ENCODE measurements at regions of chr5 and their contacts with region 1.

Region 1: GRCh38 chr5:78964887-78965286 is 20.2 kb downstream of the ARSB start:
- DNase-seq: peak; percentile 38 to 77
- ATAC-seq: peak; percentile 90 to 92
- H3K4me3 ChIP-seq: no peak overlapping the region
- H3K27ac ChIP-seq: no peak overlapping the region
- H3K4me1 ChIP-seq: no peaks in the 10 kb centered on the region
- CTCF ChIP-seq: peak; percentile 84
- EP300 ChIP-seq: no peak
- POLR2A ChIP-seq: no peak
- RAD21 ChIP-seq: peak; percentile 89 to 93

Region 2: GRCh38 chr5:78467752-78468357 is 497.0 kb before region 1 on chr5:
- CTCF ChIA-PET with region 1: interaction called, 47 read pairs
- POLR2A ChIA-PET with region 1: no interaction called
- DNase-seq: peak; percentile 37 to 54
- ATAC-seq: peak; percentile 58 to 86; a peak in 3 of 6 replicates
- H3K4me3 ChIP-seq: no peak overlapping the region
- H3K27ac ChIP-seq: no peak overlapping the region
- H3K4me1 ChIP-seq: 0 out of 3 replicates have a peak, but pooled peaks cover 4% of the 10 kb centered on the region
- CTCF ChIP-seq: peak; percentile 87
- EP300 ChIP-seq: no peak
- POLR2A ChIP-seq: no peak
- RAD21 ChIP-seq: peak; percentile 79 to 81

Region 3: DNA sequence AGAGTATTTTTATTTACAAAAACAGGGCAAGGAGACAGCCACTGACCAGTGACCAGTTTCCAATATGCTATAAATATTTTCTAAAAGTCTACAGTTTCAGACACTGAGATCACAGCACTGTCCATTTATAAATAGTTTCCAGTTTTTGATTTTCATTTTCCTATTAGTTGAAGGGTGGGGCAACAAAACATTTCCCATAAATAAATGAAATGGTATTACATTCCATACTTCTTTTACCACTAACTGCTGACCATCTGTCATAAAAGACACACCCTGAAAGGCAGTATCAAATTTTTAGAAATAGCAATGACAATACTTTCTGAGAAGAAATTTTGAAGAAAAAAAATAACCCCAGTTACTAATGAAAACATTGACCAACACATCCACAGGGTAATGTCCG is 106.5 kb before region 1 on chr5:
- CTCF ChIA-PET with region 1: no interaction called
- POLR2A ChIA-PET with region 1: no interaction called
- DNase-seq: no peak
- ATAC-seq: no peak
- H3K4me3 ChIP-seq: no peak overlapping the region
- H3K27ac ChIP-seq: no peak overlapping the region
- H3K4me1 ChIP-seq: no peaks in the 10 kb centered on the region
- CTCF ChIP-seq: no peak
- EP300 ChIP-seq: no peak
- POLR2A ChIP-seq: no peak
- RAD21 ChIP-seq: no peak

Region 4: GRCh38 chr5:78899922-78900362 is 64.9 kb before region 1 on chr5:
- CTCF ChIA-PET with region 1: interaction called, 20 read pairs
- POLR2A ChIA-PET with region 1: no interaction called
- DNase-seq: peak; percentile 11 to 50
- ATAC-seq: peak in 1 of 2 experiments; percentile 77; a peak in 3 of 6 replicates
- H3K4me3 ChIP-seq: no peak overlapping the region
- H3K27ac ChIP-seq: no peak overlapping the region
- H3K4me1 ChIP-seq: no peaks in the 10 kb centered on the region
- CTCF ChIP-seq: peak; percentile 55
- EP300 ChIP-seq: no peak
- POLR2A ChIP-seq: no peak
- RAD21 ChIP-seq: peak; percentile 58 to 86

Region 5: DNA sequence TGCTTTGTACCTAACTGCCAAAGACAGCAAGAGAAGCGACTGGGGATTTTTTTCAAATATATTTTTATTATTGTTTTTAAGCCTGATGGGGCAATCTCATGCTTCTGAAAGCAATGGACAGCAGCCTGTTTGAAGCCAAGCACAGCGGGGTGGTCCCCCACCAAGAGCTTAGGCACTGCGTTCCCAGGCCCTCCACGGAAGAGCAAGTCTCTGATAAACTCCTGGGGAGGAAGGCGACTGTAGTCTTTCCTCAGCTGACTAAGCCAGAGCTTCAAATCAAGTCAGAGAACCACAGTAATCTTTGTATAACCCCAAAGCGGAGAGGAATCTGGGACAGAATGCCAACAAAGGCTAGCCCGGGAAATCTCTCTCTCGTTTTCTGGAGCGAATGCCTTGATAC is 34.2 kb before region 1 on chr5:
- CTCF ChIA-PET with region 1: interaction called, 15 read pairs
- POLR2A ChIA-PET with region 1: no interaction called
- DNase-seq: no peak
- ATAC-seq: no peak
- H3K4me3 ChIP-seq: no peak overlapping the region
- H3K27ac ChIP-seq: no peak overlapping the region
- H3K4me1 ChIP-seq: peaks cover 9% of the 10 kb centered on the region
- CTCF ChIP-seq: no peak
- EP300 ChIP-seq: no peak
- POLR2A ChIP-seq: no peak
- RAD21 ChIP-seq: no peak

Region 6: GRCh38 chr5:78953092-78953800 is 11.6 kb before region 1 on chr5:
- CTCF ChIA-PET with region 1: interaction called, 18 read pairs
- POLR2A ChIA-PET with region 1: no interaction called
- DNase-seq: no peak
- ATAC-seq: no peak
- H3K4me3 ChIP-seq: no peak overlapping the region
- H3K27ac ChIP-seq: no peak overlapping the region
- H3K4me1 ChIP-seq: peaks cover 1% of the 10 kb centered on the region; the same call in 2 of the 3 replicates
- CTCF ChIP-seq: no peak
- EP300 ChIP-seq: no peak
- POLR2A ChIP-seq: no peak
- RAD21 ChIP-seq: no peak

Region 7: GRCh38 chr5:78993165-78993564 is 28.3 kb after region 1 on chr5:
- CTCF ChIA-PET with region 1: no interaction called
- POLR2A ChIA-PET with region 1: no interaction called
- DNase-seq: no peak
- ATAC-seq: no peak
- H3K4me3 ChIP-seq: no peak overlapping the region
- H3K27ac ChIP-seq: no peak overlapping the region
- H3K4me1 ChIP-seq: no peaks in the 10 kb centered on the region
- CTCF ChIP-seq: no peak
- EP300 ChIP-seq: no peak
- POLR2A ChIP-seq: no peak
- RAD21 ChIP-seq: no peak